ENCODE measurements at regions of chr1 and their contacts with region 1.

Region 1: DNA sequence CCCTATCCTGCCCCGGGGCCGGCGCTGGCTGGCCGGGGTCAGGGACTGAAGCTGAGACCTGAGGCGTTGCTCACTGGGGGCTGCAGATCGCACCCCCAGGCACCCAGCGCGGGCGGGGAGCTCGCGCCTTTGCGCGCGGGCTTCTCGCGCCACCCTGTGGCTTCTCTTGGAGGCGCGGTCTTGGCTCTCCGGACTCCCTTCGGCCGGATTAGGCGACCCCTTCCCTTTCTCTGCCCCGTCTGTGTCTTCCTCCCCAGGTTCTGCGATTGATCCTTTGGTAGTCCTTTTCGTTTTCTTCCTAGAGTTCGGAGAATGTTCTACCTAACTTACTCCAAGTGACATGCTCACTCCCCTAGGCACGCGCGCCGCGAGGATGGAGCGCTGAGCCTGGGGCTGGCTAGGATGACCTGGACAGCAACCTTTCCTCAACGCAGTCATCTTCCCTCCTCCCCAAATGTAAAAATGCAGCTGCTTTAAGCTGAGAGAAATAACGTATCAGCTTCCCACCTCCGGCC is 495 bp upstream of the NTRK1 start:
- DNase-seq: peak; percentile 48 to 70
- ATAC-seq: peak; percentile 73 to 87
- H3K4me3 ChIP-seq: peak overlapping the region; percentile 46
- H3K27ac ChIP-seq: peak overlapping the region in 1 of 2 experiments; percentile 59; a peak in 3 of 6 replicates
- H3K4me1 ChIP-seq: peaks cover 8% of the 10 kb centered on the region; the same call in 1 of the 3 replicates
- CTCF ChIP-seq: peak; percentile 96
- EP300 ChIP-seq: no peak
- POLR2A ChIP-seq: no peak
- RAD21 ChIP-seq: peak; percentile 79 to 92

Region 2: GRCh38 chr1:156721535-156721934 is 138.6 kb before region 1 on chr1:
- CTCF ChIA-PET with region 1: interaction called, 117 read pairs
- POLR2A ChIA-PET with region 1: no interaction called
- DNase-seq: no peak
- ATAC-seq: no peak
- H3K4me3 ChIP-seq: no peak overlapping the region
- H3K27ac ChIP-seq: no peak overlapping the region
- H3K4me1 ChIP-seq: peaks cover 16% of the 10 kb centered on the region
- CTCF ChIP-seq: no peak
- EP300 ChIP-seq: no peak
- POLR2A ChIP-seq: no peak
- RAD21 ChIP-seq: no peak

Region 3: GRCh38 chr1:156797212-156797871 is 62.8 kb before region 1 on chr1:
- CTCF ChIA-PET with region 1: interaction called, 480 read pairs
- POLR2A ChIA-PET with region 1: interaction called, 7 read pairs
- DNase-seq: peak; percentile 68 to 75
- ATAC-seq: peak; percentile 89 to 91
- H3K4me3 ChIP-seq: no peak overlapping the region
- H3K27ac ChIP-seq: no peak overlapping the region
- H3K4me1 ChIP-seq: no peaks in the 10 kb centered on the region
- CTCF ChIP-seq: peak; percentile 87
- EP300 ChIP-seq: no peak
- POLR2A ChIP-seq: no peak
- RAD21 ChIP-seq: peak; percentile 72 to 78

Region 4: DNA sequence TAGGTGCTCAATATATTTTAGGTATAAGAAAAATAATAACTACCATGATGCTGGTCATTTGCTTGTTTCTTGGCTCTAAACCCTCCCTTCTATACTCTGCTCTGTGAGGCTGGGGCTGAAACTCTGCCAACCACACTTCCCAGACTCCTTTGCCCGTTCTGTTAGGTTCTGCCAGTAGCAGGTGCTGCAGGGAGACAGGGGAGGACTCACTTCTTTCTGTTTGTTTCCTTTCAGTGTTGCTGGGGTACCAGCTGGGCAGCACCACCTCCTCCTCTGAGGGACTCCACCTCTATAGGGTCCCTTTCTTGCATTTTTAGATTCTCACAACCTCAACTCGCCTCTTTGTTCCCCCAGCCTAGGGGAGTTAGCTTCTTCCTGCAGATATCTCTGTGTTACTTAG is 26.6 kb before region 1 on chr1:
- CTCF ChIA-PET with region 1: interaction called, 289 read pairs
- POLR2A ChIA-PET with region 1: no interaction called
- DNase-seq: no peak
- ATAC-seq: no peak
- H3K4me3 ChIP-seq: no peak overlapping the region
- H3K27ac ChIP-seq: no peak overlapping the region
- H3K4me1 ChIP-seq: no peaks in the 10 kb centered on the region
- CTCF ChIP-seq: no peak
- EP300 ChIP-seq: no peak
- POLR2A ChIP-seq: no peak
- RAD21 ChIP-seq: no peak

Region 5: DNA sequence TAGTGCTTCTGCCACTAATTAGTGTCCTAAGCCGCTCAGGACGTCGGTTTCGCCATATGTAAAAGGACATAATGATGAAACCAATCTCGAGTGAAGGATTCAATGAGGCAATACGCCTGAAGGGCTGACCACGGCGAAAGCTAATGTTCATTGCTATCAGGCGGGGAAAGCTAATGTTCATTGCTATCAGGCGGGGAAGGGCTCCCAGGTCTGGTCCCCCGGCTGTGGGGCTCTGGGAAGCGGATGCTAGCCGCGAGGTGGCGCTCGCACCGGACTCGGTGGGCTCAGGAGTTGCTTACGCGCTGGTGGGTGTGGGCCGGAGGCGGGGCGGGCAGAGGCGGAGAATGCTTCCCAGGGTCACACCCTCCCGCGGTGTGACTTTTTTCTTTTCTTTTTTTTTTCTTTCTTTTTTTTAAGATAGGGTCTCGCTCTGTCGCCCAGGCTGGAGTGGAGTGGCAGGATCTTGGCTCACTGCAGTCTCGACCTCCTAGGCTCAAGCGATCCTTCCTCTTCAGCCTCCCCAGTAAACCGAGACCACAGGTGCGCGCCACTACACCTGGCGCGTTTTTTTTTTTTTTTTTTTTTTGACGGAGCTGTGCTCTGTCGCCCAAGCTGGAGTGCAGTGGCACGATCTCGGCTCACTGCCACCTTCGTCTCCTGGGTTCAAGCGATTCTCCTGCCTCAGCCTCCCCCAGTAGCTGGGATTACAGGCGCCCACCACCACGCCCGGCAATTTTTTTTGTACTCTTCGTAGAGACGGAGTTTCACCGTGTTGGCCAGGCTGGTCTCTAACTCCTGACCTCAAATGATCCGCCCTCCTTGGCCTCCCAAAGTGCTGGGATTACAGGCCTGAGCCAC is 32.2 kb after region 1 on chr1:
- CTCF ChIA-PET with region 1: interaction called, 178 read pairs
- POLR2A ChIA-PET with region 1: interaction called, 3 read pairs
- DNase-seq: peak; percentile 89
- ATAC-seq: peak; percentile 65 to 86
- H3K4me3 ChIP-seq: peak overlapping the region; percentile 19; the same call in 2 of the 3 replicates
- H3K27ac ChIP-seq: peak overlapping the region; percentile 61 to 93; a peak in 5 of 6 replicates
- H3K4me1 ChIP-seq: peaks cover 40% of the 10 kb centered on the region
- CTCF ChIP-seq: peak; percentile 93
- EP300 ChIP-seq: no peak
- POLR2A ChIP-seq: no peak
- RAD21 ChIP-seq: peak; percentile 69 to 83

Region 6: DNA sequence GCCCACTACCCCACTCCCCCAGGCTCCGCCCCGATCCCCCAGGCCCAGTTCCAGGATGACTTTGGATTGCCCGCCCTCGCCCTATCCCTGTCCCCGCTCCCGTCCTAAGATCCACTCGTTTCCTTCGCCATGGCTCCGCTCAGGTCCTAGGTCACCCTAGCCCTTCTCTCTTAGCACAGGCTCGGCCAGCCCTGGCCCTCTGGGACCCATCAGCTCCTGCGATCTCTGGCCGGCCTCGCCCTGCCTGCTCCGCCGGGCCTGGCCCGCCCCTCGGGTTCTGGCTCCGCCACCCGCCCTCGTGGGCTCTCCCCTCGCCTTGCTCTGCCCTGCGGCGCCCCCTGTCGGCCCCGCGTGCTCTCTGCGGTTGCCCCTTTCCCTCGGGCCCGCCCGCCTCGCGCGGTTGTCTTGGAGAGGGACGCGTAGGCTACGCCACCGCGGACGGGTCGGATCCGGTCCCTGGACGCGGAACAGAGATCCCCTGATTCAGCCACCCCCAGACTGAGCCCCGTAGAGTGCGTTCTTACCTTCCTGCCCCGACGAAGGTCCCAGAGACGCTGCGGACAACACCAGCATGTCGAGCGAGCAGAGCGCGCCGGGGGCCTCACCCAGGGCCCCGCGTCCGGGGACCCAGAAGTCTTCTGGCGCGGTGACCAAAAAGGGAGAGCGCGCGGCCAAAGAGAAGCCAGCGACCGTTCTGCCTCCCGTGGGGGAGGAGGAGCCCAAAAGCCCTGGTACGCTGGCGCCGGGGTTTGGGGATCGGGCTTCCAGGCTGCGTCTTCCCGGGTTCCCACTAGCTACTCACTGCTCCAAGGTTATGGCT is 60.3 kb after region 1 on chr1 and contains the start of gene LRRC71:
- CTCF ChIA-PET with region 1: interaction called, 45 read pairs
- POLR2A ChIA-PET with region 1: no interaction called
- DNase-seq: peak; percentile 79 to 90
- ATAC-seq: peak; percentile 87 to 97
- H3K4me3 ChIP-seq: peak within 1 kb of the TSS; percentile 29
- H3K27ac ChIP-seq: peak within 1 kb of the TSS; percentile 65 to 86
- H3K4me1 ChIP-seq: peaks cover 10% of the 10 kb centered on the region
- CTCF ChIP-seq: peak; percentile 94
- EP300 ChIP-seq: no peak
- POLR2A ChIP-seq: peak; percentile 20; the same call in 1 of the 2 replicates
- RAD21 ChIP-seq: peak; percentile 89 to 97
- polyA plus RNA-seq, gene LRRC71: 0.15 TPM in 1 of 2 replicates, not detected in the other

Region 7: DNA sequence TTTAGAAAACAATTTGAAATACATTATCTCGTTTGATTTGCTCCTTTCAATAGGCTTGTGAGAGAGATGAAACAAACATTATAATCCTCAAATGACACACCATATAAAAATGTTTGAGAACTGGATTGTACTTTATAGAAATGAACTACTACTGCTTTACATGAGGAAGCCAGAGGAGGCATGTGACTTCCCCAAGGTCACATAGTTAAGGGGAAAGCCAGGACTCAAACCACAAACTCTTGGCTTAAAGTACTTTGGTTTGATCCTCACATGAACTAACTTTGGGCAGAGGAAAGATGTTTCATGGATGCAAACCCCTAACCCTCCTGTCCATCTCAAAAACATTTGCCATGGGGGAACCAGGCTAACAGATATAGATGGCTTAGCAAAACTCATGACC is 180.6 kb after region 1 on chr1:
- CTCF ChIA-PET with region 1: no interaction called
- POLR2A ChIA-PET with region 1: no interaction called
- DNase-seq: no peak
- ATAC-seq: no peak
- H3K4me3 ChIP-seq: no peak overlapping the region
- H3K27ac ChIP-seq: no peak overlapping the region
- H3K4me1 ChIP-seq: peaks cover 31% of the 10 kb centered on the region
- CTCF ChIP-seq: no peak
- EP300 ChIP-seq: no peak
- POLR2A ChIP-seq: no peak
- RAD21 ChIP-seq: no peak

Measured in A549 (cell line).